Natural killer cell (primary cell): ENCODE measurements at regions of chr6 and their contacts with region 1.

Region 1: DNA sequence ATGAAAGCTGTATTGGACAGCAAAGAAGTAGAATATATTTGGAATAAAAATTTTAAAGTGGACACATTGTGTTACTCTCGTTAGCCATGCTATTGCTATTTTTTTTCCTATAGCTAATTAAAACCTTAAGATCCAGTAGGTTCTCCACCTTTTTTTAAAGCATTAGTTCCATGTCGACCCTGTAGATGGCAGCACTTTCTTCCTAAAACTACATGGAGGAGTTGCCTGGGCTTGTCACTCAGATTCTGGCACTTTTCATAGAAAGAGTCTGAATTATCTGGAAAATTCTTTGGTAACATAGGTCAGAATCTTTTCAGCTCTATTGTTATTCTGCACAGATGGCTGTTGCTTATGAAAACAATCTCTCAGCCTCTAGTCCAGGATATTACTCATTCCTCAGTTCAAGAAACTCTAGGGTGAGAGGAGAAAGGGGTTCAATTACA is 42.0 kb upstream of the ESR1 start:
- DNase-seq: peak in 1 of 2 donors; percentile 68
- ATAC-seq: peak in 2 of 3 donors; percentile 53 to 70
- H3K4me3 ChIP-seq: no peak overlapping the region
- H3K4me3 Mint-ChIP-seq: no peak overlapping the region
- H3K27ac ChIP-seq: no peak overlapping the region
- H3K27ac Mint-ChIP-seq: no peak overlapping the region
- H3K4me1 ChIP-seq: no peaks in the 10 kb centered on the region
- H3K4me1 Mint-ChIP-seq: peaks cover 0 to 5% of the 10 kb centered on the region in 2 donors
- H3K27me3 ChIP-seq: no peaks in the 10 kb centered on the region
- H3K27me3 Mint-ChIP-seq: peaks cover 20 to 22% of the 10 kb centered on the region in 2 donors
- CTCF ChIP-seq: peak; percentile 69

Region 2: GRCh38 chr6:151087861-151088598 is 677.4 kb before region 1 on chr6:
- intact Hi-C with region 1: no loop called
- DNase-seq: no peak
- ATAC-seq: no peak
- H3K4me3 ChIP-seq: no peak overlapping the region
- H3K4me3 Mint-ChIP-seq: no peak overlapping the region
- H3K27ac ChIP-seq: no peak overlapping the region
- H3K27ac Mint-ChIP-seq: no peak overlapping the region
- H3K4me1 ChIP-seq: no peaks in the 10 kb centered on the region
- H3K4me1 Mint-ChIP-seq: no peaks in the 10 kb centered on the region
- H3K27me3 ChIP-seq: no peaks in the 10 kb centered on the region
- H3K27me3 Mint-ChIP-seq: no peaks in the 10 kb centered on the region
- CTCF ChIP-seq: no peak

Region 3: GRCh38 chr6:152267967-152268845 is 502.7 kb after region 1 on chr6:
- intact Hi-C with region 1: loop called (anchors 5 kb)
- DNase-seq: peak in 1 of 2 donors; percentile 54
- ATAC-seq: no peak
- H3K4me3 ChIP-seq: no peak overlapping the region
- H3K4me3 Mint-ChIP-seq: no peak overlapping the region
- H3K27ac ChIP-seq: no peak overlapping the region
- H3K27ac Mint-ChIP-seq: peak overlapping the region in 1 of 2 donors; percentile 27
- H3K4me1 ChIP-seq: no peaks in the 10 kb centered on the region
- H3K4me1 Mint-ChIP-seq: peaks cover 6 to 13% of the 10 kb centered on the region in 2 donors
- H3K27me3 ChIP-seq: no peaks in the 10 kb centered on the region
- H3K27me3 Mint-ChIP-seq: no peaks in the 10 kb centered on the region
- CTCF ChIP-seq: peak; percentile 23

Region 4: GRCh38 chr6:152338335-152339125 is 573.1 kb after region 1 on chr6:
- intact Hi-C with region 1: loop called (anchors 10 kb)
- DNase-seq: peak; percentile 35 to 78
- ATAC-seq: peak; percentile 82 to 98 (median 84)
- H3K4me3 ChIP-seq: no peak overlapping the region
- H3K4me3 Mint-ChIP-seq: no peak overlapping the region
- H3K27ac ChIP-seq: no peak overlapping the region
- H3K27ac Mint-ChIP-seq: peak overlapping the region; percentile 49 to 53
- H3K4me1 ChIP-seq: no peaks in the 10 kb centered on the region
- H3K4me1 Mint-ChIP-seq: peaks cover 6% of the 10 kb centered on the region in 2 donors
- H3K27me3 ChIP-seq: no peaks in the 10 kb centered on the region
- H3K27me3 Mint-ChIP-seq: no peaks in the 10 kb centered on the region
- CTCF ChIP-seq: peak; percentile 96